Testis (tissue), 5 donors: ENCODE measurements at regions of chr7 and their contacts with region 1.

Region 1: GRCh38 chr7:112414855-112415490 is 35.3 kb upstream of the IFRD1 start:
- DNase-seq: no peak
- H3K4me3 ChIP-seq: no peak overlapping the region
- H3K27ac ChIP-seq: no peak overlapping the region
- H3K4me1 ChIP-seq: no peaks in the 10 kb centered on the region
- H3K27me3 ChIP-seq: no peaks in the 10 kb centered on the region
- CTCF ChIP-seq: peak; percentile 28 to 44 (median 36)
- POLR2A ChIP-seq: no peak

Region 2: GRCh38 chr7:111763221-111763801 is 651.7 kb before region 1 on chr7:
- intact Hi-C with region 1: loop called (anchors 10 kb)
- DNase-seq: no peak
- H3K4me3 ChIP-seq: no peak overlapping the region
- H3K27ac ChIP-seq: no peak overlapping the region
- H3K4me1 ChIP-seq: peaks cover 5% of the 10 kb centered on the region
- H3K27me3 ChIP-seq: no peaks in the 10 kb centered on the region
- CTCF ChIP-seq: peak; percentile 53 to 67 (median 58)
- POLR2A ChIP-seq: no peak

Region 3: GRCh38 chr7:112556633-112557032 is 141.7 kb after region 1 on chr7:
- intact Hi-C with region 1: no loop called
- DNase-seq: no peak
- H3K4me3 ChIP-seq: no peak overlapping the region
- H3K27ac ChIP-seq: no peak overlapping the region
- H3K4me1 ChIP-seq: no peaks in the 10 kb centered on the region
- H3K27me3 ChIP-seq: no peaks in the 10 kb centered on the region
- CTCF ChIP-seq: no peak
- POLR2A ChIP-seq: no peak